Calu3 (cell line): ENCODE measurements at regions of chr11 and their contacts with region 1.

Region 1: DNA sequence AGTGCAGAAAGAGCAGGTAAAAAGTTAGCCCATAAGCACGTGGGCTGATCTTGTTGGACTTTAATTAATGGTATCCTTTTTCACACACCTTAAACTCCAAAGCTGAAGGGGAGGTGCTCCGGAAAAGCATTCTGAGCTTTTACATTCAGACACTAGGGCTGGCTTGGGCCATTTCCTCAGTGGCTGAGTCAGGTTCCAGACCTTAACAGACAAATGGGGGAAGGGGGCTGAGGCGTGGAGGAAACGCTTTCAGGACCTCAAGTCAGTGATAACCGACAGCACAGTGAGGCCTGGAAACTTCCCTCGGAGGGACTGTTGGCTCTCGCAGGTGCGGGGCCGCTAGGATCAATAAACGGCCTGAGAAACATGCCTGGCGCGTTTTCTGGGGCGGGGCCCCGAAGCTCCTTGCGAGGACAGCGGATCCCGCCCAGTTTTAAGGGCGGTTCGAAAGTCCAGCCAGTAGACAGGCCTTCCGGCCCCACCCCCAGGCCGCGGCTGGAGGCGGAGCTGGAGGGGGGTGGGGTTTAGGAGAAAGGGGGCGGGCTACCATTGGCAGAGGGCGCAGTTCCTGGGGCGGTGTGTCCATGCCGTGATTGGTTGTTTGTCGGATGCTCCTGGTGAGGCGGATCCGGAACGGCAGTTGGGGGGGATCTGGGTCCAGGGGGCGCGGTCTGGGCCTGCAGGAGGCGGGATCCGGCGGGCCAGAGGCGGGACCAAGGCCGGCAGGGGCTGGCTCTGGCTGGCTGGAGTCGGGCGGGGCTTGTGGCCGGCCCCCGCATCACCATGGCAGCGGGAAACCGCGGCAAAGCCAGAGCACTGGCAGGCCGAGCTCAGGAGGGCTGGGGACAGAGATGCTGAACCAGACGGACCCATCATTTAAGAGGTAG is 8.0 kb downstream of the C11orf52 start:
- DNase-seq: peak; percentile 95
- H3K4me3 Mint-ChIP-seq: peak overlapping the region; percentile 70
- H3K27ac Mint-ChIP-seq: peak overlapping the region; percentile 68
- H3K4me1 Mint-ChIP-seq: peaks cover 23% of the 10 kb centered on the region
- H3K27me3 Mint-ChIP-seq: no peaks in the 10 kb centered on the region
- CTCF ChIP-seq: no peak

Region 2: DNA sequence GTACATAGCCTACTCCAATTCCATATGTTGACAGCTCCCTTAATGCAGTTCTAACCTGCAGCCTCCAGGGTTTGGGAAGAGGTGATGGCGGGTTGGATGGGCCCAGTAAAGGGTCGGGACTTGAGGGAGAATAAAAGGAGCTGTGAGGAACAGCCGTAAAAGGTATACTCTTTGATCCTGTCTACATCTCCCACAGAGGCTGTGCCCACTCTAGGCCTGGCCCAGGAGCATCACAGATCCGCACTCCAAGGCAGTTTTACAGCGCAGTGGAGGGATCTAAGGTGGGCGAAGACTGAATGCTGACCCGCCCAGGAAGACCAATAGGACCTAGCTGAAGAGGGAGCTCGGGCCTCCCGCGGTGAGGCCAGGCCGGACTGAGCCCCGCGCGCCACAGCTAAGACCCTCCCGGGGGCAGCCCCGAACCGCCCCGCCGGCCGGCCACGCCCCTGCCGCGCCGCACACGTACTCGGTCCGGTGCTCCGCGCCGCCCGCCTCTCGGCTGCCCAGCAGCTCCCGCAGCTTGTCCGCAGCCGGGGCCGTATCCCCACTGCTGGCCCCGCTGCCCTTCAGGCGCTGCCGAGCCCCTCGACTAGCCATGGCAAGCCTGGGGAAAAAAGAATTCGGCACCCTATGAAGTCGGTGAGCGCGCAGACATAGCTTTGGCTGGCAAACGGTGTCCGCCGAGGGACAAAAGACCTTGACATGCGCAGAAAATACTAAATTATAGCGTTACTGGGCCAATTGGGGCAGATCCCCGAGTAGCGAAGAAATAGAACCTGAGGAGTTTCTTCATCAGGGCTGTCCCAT is 55.7 kb before region 1 on chr11 and contains the start of gene ALG9:
- CTCF ChIA-PET with region 1: interaction called, 11 read pairs
- intact Hi-C with region 1: no loop called
- DNase-seq: peak; percentile 76
- H3K4me3 Mint-ChIP-seq: peak within 1 kb of the TSS; percentile 78
- H3K27ac Mint-ChIP-seq: peak within 1 kb of the TSS; percentile 70
- H3K4me1 Mint-ChIP-seq: no peaks in the 10 kb centered on the region
- H3K27me3 Mint-ChIP-seq: no peaks in the 10 kb centered on the region
- CTCF ChIP-seq: peak; percentile 8
- total RNA-seq, gene ALG9: 12.6 and 14.2 TPM in 2 replicates